ENCODE measurements at regions of chr1 and their contacts with region 1.

Region 1: GRCh38 chr1:66503841-66504470 is 30.0 kb upstream of the SGIP1 start:
- DNase-seq: peak; percentile 88
- H3K4me3 ChIP-seq: no peak overlapping the region
- H3K27ac ChIP-seq: no peak overlapping the region
- H3K4me1 ChIP-seq: peaks cover 5% of the 10 kb centered on the region
- H3K27me3 ChIP-seq: no peaks in the 10 kb centered on the region
- CTCF ChIP-seq: peak; percentile 58 to 76
- POLR2A ChIP-seq: no peak

Region 2: GRCh38 chr1:66253330-66253921 is 250.5 kb before region 1 on chr1:
- CTCF ChIA-PET with region 1: interaction called, 20 read pairs
- POLR2A ChIA-PET with region 1: no interaction called
- dilution Hi-C with region 1: no loop called
- intact Hi-C with region 1: loop called (anchors 1 kb)
- DNase-seq: peak; percentile 89
- H3K4me3 ChIP-seq: no peak overlapping the region
- H3K27ac ChIP-seq: no peak overlapping the region
- H3K4me1 ChIP-seq: peaks cover 6% of the 10 kb centered on the region
- H3K27me3 ChIP-seq: no peaks in the 10 kb centered on the region
- CTCF ChIP-seq: peak; percentile 60
- POLR2A ChIP-seq: no peak

Region 3: GRCh38 chr1:66278260-66279021 is 225.5 kb before region 1 on chr1:
- CTCF ChIA-PET with region 1: no interaction called
- POLR2A ChIA-PET with region 1: no interaction called
- dilution Hi-C with region 1: no loop called
- intact Hi-C with region 1: no loop called
- DNase-seq: no peak
- H3K4me3 ChIP-seq: no peak overlapping the region
- H3K27ac ChIP-seq: no peak overlapping the region
- H3K4me1 ChIP-seq: peaks cover 4% of the 10 kb centered on the region
- H3K27me3 ChIP-seq: no peaks in the 10 kb centered on the region
- CTCF ChIP-seq: no peak
- POLR2A ChIP-seq: no peak

Region 4: DNA sequence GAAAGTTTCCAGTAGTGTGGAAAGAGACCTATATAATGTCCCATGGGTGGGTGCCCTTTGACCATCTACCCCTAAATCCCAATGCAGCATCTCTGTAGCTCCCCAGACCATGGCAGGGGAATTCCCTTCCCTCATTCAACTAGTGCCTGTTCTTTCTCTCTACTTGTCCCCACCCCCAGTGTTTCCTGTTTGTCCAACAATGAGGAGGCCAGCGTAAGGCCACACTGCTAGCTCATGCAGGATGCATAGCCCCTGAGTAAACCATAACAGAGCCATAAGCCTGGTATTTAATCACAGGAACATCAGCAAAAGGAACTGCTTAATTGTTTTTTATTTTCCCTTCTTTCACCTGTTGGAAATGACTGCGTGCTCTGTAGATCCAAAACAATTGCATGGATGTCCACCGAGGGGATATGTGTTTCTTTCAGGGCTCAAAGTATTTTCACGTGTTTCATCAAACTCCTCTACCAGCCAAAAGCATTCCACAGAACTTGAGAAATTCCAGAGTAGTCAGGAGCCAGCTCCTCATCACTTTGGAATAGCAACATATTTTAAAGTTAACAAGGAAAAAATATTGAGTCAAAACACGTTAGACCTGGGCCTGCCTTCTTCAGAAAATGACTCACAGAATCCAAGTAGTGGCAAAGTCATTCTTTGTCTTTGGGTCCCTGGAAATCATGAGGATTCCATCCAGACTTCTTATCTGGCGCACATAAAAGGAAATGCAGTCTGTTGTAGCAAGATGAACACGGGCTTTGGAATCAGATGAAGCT is 132.5 kb before region 1 on chr1:
- CTCF ChIA-PET with region 1: interaction called, 9 read pairs
- POLR2A ChIA-PET with region 1: no interaction called
- dilution Hi-C with region 1: no loop called
- intact Hi-C with region 1: loop called (anchors 2 kb)
- DNase-seq: peak; percentile 98
- H3K4me3 ChIP-seq: peak overlapping the region in 1 of 3 experiments; percentile 29
- H3K27ac ChIP-seq: peak overlapping the region; percentile 99
- H3K4me1 ChIP-seq: peaks cover 60% of the 10 kb centered on the region
- H3K27me3 ChIP-seq: no peaks in the 10 kb centered on the region
- CTCF ChIP-seq: no peak
- POLR2A ChIP-seq: no peak

Region 5: DNA sequence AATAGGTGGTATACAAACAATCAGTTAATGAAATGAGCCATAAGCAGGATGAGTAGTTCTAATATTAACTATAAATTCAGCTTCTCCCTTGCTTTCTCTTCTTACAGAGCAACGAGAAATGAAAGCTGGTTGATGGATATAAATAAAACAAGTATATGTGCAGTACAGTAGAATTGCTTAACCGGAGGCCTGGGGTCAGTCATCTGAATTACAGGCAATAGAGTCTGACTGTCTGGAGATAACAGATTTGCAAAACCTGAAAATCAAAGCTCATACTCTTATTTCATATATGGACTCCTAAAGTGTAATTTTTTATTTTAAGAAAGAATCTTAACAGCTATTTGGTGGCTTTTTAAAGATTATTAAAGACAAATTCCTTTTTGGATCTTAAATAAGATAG is 13.1 kb before region 1 on chr1:
- CTCF ChIA-PET with region 1: interaction called, 51 read pairs
- POLR2A ChIA-PET with region 1: no interaction called
- dilution Hi-C with region 1: no loop called
- intact Hi-C with region 1: no loop called
- DNase-seq: peak; percentile 69
- H3K4me3 ChIP-seq: peak overlapping the region in 1 of 3 experiments; percentile 17
- H3K27ac ChIP-seq: peak overlapping the region; percentile 40
- H3K4me1 ChIP-seq: peaks cover 21% of the 10 kb centered on the region
- H3K27me3 ChIP-seq: no peaks in the 10 kb centered on the region
- CTCF ChIP-seq: no peak
- POLR2A ChIP-seq: no peak

Region 6: DNA sequence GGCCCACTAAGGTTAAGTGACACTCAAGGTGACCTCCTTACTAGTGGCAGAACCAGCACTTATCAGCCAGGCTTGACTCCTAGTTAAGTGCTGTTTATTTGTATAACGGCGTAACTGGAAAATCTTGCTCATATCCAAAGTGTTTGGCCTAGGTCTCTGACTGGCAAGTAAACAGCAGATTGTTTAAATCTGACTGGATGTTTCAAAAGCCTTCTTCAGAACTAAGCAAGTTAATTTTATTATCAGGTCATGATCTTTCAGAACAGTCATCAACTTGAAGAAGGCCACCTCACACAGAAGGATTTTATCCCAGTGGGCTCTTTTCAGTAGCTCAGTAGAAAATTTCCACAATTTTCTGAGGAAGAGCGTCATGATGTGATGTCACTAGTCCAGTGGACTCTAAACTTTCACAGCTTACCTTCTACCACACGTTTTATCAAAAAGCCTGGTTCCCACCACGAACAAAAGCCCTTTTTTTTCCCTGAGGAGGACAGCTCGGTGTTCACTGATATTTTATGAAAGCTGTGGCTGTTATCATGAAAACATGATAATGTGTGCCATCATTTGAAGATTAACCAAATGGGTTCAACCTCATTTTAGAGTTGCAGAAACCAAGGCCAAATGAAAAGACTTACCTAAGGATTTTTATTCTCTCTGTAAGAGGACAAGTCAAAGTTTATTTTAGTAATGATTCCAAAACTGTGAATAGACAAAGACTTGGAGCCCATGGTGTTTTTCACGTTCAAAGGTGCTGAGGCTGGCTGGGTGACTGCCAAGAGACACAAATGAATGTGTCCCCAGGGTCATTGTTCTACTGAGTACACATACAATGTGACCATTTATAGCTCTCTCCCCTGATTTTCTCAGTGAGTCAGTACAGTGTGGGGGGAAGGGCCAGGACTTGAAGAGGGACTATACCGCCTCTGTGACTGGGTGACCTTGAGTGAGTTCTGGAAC is 39.1 kb after region 1 on chr1:
- CTCF ChIA-PET with region 1: interaction called, 7 read pairs
- POLR2A ChIA-PET with region 1: no interaction called
- dilution Hi-C with region 1: no loop called
- intact Hi-C with region 1: loop called (anchors 1 kb)
- DNase-seq: peak; percentile 97
- H3K4me3 ChIP-seq: no peak overlapping the region
- H3K27ac ChIP-seq: peak overlapping the region; percentile 90
- H3K4me1 ChIP-seq: peaks cover 36% of the 10 kb centered on the region
- H3K27me3 ChIP-seq: no peaks in the 10 kb centered on the region
- CTCF ChIP-seq: no peak
- POLR2A ChIP-seq: no peak

Region 7: DNA sequence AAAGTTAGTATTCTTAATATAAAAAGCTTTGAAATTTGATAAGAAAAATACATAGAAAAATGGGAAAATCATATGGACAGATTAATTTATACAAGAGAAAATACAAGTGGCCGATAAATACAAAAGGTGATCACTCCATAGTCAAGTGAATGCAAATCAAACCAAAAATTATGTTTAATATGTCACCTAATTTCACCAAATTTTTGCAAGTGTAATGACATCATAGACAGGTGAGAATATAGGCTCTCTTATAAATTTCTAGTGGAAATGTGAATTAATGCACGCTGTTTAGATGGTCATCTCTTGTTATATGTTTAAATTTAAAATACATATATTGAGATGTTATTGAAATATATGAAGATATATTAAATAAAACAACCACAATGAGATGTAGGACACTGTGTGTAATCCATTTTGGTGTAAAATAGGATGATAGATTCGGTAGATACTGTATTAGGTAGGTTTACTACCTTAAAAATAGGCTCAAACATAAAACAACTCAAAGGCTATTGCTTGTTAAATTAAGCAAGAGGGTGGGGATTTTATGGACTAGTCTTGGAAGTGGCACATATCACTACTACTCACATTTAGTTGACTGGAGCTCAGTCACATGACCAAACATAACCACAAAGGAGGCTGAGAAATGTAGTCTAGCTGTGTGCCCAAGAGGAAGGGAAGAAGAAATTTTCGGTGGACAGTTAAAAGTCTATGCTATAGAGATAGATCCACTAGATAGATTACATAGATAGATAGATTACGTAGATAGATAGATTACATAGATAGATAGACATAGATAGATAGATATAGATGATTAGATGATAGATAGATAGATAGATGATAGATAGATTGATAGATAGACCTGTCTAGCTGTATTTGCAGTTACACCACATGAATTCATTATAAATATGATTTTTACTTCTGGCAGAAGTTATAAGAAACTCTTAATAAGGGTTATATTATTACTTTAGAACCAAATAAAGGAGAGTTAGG is 288.0 kb after region 1 on chr1:
- CTCF ChIA-PET with region 1: no interaction called
- POLR2A ChIA-PET with region 1: no interaction called
- dilution Hi-C with region 1: no loop called
- intact Hi-C with region 1: no loop called
- DNase-seq: no peak
- H3K4me3 ChIP-seq: no peak overlapping the region
- H3K27ac ChIP-seq: no peak overlapping the region
- H3K4me1 ChIP-seq: no peaks in the 10 kb centered on the region
- H3K27me3 ChIP-seq: no peaks in the 10 kb centered on the region
- CTCF ChIP-seq: no peak
- POLR2A ChIP-seq: no peak